Adrenal gland (tissue), 19 donors: ENCODE measurements at regions of chr21 and their contacts with region 1.

Region 1: DNA sequence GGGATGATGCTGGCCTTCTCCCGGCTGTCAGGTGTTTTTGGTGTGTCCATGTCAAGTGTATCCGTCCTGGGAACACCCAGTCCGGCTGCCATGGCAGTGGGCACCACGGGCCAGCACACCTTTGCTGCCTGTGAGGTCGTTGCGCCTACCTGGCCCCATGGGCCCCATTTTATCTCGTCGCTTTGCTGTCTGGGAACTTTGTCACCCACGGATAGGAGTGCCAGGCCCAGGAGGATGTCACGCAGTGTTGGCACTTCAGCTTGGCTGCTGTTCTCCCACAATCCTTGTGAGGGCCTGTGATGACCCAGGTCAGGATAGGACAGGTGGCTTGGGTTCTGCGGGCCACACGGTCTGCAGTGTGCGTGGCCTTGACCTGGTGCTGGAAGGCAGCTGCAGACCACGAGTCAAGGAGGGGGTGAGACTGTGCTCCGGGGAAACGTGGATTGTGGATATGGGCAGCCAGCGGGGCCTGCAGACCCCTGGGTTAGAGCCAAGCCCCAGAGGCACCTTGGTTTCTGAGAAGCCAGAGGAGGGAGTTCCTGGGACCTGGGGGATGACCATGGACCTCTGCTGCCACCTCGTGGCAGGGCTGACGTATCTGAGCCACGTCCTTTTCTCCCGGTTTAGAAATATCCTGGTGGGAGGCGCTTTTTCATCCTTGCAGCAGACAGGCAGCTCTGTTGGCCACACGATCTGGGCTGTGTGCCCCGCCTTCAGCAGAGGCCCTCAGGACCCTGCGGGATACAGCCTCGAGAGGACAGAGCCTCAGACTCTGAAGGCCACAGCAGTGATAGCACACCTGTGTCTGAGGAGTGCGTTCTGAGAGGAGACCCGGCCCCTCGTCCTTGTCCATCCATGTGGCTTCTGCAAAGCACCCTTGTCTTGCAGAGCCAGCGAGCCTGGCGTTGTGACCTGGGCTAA is 161.1 kb upstream of the COL6A1 start:
- DNase-seq: peak; percentile 75 to 90 (median 80)
- H3K4me3 ChIP-seq: no peak overlapping the region
- H3K27ac ChIP-seq: peak overlapping the region in 1 of 5 donors; percentile 40
- H3K4me1 ChIP-seq: peaks cover 0 to 8% of the 10 kb centered on the region in 2 donors
- H3K27me3 ChIP-seq: no peaks in the 10 kb centered on the region
- CTCF ChIP-seq: peak; percentile 72 to 93 (median 87)
- POLR2A ChIP-seq: no peak

Region 2: GRCh38 chr21:45478115-45478801 is 342.2 kb before region 1 on chr21:
- intact Hi-C with region 1: loop called in 1 of 2 experiments (anchors 10 kb)
- DNase-seq: peak; percentile 51 to 88 (median 68)
- H3K4me3 ChIP-seq: peak overlapping the region in 1 of 4 donors; percentile 13
- H3K27ac ChIP-seq: peak overlapping the region in 2 of 5 donors; percentile 68 to 78
- H3K4me1 ChIP-seq: peaks cover 0 to 7% of the 10 kb centered on the region in 2 donors
- H3K27me3 ChIP-seq: no peaks in the 10 kb centered on the region
- CTCF ChIP-seq: peak; percentile 66 to 85 (median 83)
- POLR2A ChIP-seq: no peak

Region 3: DNA sequence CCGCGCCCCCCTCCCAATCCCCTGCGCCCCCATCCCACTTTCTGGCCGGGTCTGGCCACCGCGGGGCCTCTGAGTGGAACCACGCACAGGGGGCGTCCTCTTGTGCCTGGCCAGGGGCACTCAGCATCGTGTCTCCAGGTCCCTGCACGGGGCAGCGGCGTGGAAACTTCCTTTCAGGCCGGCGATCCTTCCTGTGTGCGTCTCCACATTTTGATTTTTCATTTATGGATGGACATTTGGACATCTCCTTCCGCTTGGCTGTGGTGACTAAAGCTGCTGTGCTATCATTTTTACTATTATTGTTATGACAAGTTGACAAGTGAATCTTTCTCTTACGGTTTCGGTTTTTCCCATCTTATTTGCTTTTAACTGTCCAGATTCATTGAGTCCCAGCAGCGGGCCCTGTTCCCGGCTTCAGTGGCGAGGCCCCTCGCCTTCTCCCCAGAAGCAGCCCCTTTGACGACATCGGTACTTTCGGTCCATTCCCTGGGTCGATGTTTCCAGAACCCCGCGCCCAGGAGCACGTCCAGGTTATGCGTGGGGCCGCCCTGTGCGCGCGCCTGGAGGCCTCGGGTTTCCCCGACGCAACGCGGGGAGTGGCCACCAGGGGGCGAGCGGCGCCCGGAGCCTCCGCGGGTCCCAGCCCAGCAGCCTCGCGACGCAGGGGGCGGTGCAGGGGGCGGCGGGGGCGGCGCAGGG is 265.8 kb before region 1 on chr21:
- intact Hi-C with region 1: loop called (anchors 5 kb)
- DNase-seq: peak; percentile 75 to 95 (median 85)
- H3K4me3 ChIP-seq: peak overlapping the region in 3 of 4 donors; percentile 26 to 68 (median 37)
- H3K27ac ChIP-seq: peak overlapping the region in 4 of 5 donors; percentile 57 to 88 (median 76)
- H3K4me1 ChIP-seq: peaks cover 0 to 8% of the 10 kb centered on the region in 2 donors
- H3K27me3 ChIP-seq: no peaks in the 10 kb centered on the region
- CTCF ChIP-seq: peak; percentile 54 to 97 (median 82)
- POLR2A ChIP-seq: peak in 1 of 2 donors; percentile 41

Region 4: DNA sequence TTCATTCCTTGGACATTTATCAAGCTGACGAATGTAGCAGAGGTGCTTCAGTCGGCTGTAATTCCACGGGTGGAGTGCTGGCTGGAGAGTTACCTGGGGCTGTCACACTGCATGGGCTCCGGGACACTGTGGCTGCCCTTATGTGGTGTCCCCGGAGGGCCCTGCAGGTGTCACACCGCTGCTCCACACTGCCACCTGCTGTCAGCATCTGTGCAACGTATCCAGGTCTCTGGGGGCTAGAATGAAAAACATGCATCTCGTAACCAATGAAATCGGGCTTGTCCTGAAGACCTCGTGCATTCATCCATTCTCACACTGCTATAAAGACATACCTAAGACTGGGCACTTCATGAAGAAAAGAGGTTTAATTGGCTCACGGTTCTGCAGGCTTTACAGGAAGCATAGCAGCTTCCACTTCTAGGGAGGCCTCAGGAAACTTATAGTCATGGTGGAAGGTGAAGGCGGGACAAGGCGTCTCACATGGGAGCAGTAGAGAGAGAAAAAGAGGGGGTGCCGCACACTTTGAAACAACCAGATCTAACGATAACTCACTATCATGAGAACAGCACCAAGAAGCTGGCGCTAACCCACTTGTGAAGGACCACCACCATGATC is 223.6 kb before region 1 on chr21:
- intact Hi-C with region 1: loop called in 1 of 2 experiments (anchors 5 kb)
- DNase-seq: peak; percentile 68 to 90 (median 80)
- H3K4me3 ChIP-seq: no peak overlapping the region
- H3K27ac ChIP-seq: no peak overlapping the region
- H3K4me1 ChIP-seq: no peaks in the 10 kb centered on the region
- H3K27me3 ChIP-seq: no peaks in the 10 kb centered on the region
- CTCF ChIP-seq: peak; percentile 76 to 93 (median 86)
- POLR2A ChIP-seq: no peak

Region 5: GRCh38 chr21:45709173-45709572 is 111.3 kb before region 1 on chr21:
- intact Hi-C with region 1: no loop called
- DNase-seq: no peak
- H3K4me3 ChIP-seq: no peak overlapping the region
- H3K27ac ChIP-seq: no peak overlapping the region
- H3K4me1 ChIP-seq: no peaks in the 10 kb centered on the region
- H3K27me3 ChIP-seq: no peaks in the 10 kb centered on the region
- CTCF ChIP-seq: no peak
- POLR2A ChIP-seq: no peak

Region 6: DNA sequence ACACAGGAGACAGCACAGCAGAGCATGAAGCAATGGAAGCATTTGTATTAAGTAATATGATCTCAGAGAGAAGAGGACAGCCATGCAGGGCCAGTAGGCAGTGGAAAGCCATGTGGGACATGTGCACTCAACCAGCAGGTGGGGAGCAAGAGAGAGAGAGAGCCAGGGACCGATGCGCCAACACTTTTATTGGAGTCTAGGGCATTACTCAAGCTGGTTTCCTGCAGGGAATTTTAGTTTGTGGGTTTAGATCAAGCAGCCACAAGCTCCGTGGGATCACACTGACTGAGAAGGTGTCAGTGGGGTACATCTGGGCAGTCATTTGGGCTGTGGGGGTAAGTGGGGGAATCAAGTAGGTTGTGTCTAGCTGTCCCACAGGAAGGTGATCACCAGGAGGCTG is 39.8 kb before region 1 on chr21:
- intact Hi-C with region 1: no loop called
- DNase-seq: no peak
- H3K4me3 ChIP-seq: no peak overlapping the region
- H3K27ac ChIP-seq: no peak overlapping the region
- H3K4me1 ChIP-seq: no peaks in the 10 kb centered on the region
- H3K27me3 ChIP-seq: no peaks in the 10 kb centered on the region
- CTCF ChIP-seq: no peak
- POLR2A ChIP-seq: no peak